ENCODE measurements at regions of chr3 and their contacts with region 1.

Region 1: GRCh38 chr3:37967260-37967881 is 23.2 kb upstream of the VILL start:
- DNase-seq: peak; percentile 88

Region 2: DNA sequence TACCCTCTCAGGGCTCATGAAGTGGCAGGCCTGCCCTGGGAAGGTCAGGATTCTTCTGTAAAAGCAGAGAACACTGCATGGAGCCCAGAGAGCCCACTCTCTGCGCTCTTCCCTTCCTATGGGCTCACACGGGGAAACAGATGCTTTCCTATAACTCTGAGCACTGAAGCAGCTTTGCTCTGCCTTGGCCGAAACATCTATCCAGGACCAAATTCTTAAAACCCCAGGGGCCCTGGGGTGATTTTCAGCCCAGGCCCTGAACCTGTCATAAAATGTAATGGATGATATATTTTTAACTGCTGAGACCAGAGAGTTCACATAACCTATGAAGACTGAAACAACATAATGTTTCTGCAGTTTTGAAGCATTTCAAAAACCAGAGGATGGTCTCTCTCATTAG is 355.6 kb before region 1 on chr3:
- intact Hi-C with region 1: no loop called
- DNase-seq: no peak

Region 3: GRCh38 chr3:37855363-37855970 is 111.9 kb before region 1 on chr3:
- intact Hi-C with region 1: loop called (anchors 2 to 5 kb)
- DNase-seq: peak; percentile 95

Region 4: GRCh38 chr3:37935290-37935668 is 32.1 kb before region 1 on chr3:
- intact Hi-C with region 1: no loop called
- DNase-seq: no peak

Region 5: DNA sequence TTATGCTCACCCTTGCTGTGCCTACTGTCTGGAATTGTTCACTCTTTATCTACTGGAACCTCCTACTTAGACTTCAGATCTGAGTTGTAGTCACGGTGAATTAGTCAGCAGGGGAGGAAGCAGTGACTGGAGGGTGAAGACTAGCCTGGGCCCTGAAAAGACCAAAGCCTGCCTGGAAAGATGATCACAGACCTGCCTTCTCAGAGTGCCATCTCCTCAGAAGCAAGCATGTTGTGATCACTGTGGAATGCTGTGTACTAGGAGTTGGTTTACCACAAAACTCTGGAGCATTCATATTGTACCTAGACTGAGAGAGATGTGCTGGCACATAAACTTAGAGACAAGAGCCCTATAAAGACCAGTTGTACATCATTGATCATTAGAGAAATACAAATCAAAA is 949.3 kb after region 1 on chr3:
- intact Hi-C with region 1: no loop called
- DNase-seq: no peak

Measured in posterior vena cava (tissue), 2 donors.